ENCODE measurements at regions of chr9 and their contacts with region 1.

Region 1: GRCh38 chr9:38061326-38061977 is 7.6 kb downstream of the SHB start:
- DNase-seq: no peak
- ATAC-seq: no peak
- H3K4me3 ChIP-seq: no peak overlapping the region
- H3K27ac ChIP-seq: peak overlapping the region; percentile 24; the same call in 1 of the 2 replicates
- H3K4me1 ChIP-seq: peaks cover 52% of the 10 kb centered on the region
- H3K27me3 ChIP-seq: no peaks in the 10 kb centered on the region
- CTCF ChIP-seq: no peak
- POLR2A ChIP-seq: no peak
- RAD21 ChIP-seq: no peak

Region 2: DNA sequence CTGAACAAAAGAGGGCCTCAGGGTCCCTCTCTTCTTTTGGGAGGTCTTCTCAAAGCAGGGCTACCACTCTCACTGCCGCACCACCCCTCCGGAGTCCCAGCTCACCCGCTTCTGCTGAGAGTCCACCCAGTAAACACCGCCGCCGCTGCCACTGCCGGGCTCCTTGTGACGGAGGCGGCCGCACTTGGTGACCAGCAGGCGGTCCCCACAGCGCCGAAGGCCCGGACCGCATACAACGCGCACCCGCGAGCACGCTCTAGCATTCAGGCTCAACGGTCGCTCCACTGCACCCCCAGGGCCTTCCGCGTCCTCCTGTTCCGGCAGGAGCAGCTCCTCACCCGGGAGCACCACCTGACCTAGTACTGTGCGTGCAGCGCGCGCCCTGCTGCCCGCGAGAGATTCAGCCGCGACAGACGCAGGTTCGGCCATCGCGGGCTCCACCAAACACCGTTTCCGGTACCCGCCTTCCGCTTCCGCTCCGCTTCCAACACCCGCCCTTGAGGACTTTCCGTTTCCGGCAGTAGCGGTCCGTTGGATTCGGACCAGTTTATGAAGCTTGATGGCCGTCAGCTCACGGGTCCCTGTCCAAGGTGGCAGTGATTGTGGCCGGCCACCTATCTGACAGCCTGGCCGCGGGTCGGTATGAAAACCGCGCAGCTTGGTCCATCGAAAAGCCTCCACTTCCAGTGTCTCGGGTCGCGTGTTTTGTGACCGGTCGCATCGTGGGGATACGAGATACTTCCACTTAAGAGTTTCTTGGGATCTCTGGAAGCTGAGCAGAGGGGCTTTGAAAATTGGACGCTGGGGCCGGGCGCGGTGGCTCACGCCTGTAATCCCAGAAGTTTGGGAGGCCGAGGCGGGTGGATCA is 276.6 kb before region 1 on chr9 and contains the start of gene EXOSC3:
- CTCF ChIA-PET with region 1: no interaction called
- POLR2A ChIA-PET with region 1: interaction called, 10 read pairs
- dilution Hi-C with region 1: no loop called
- in situ Hi-C with region 1: no loop called
- intact Hi-C with region 1: no loop called
- DNase-seq: peak; percentile 90
- ATAC-seq: peak; percentile 90
- H3K4me3 ChIP-seq: peak within 1 kb of the TSS; percentile 94
- H3K27ac ChIP-seq: peak within 1 kb of the TSS; percentile 95
- H3K4me1 ChIP-seq: peaks cover 3% of the 10 kb centered on the region; the same call in 1 of the 2 replicates
- H3K27me3 ChIP-seq: no peaks in the 10 kb centered on the region
- CTCF ChIP-seq: 0 out of 2 replicates have a peak, but pooled peaks have one; percentile 4
- POLR2A ChIP-seq: peak; percentile 68; the same call in 1 of the 2 replicates
- RAD21 ChIP-seq: peak; percentile 9
- total RNA-seq, gene EXOSC3: 27.1 and 58.6 TPM in 2 replicates

Region 3: DNA sequence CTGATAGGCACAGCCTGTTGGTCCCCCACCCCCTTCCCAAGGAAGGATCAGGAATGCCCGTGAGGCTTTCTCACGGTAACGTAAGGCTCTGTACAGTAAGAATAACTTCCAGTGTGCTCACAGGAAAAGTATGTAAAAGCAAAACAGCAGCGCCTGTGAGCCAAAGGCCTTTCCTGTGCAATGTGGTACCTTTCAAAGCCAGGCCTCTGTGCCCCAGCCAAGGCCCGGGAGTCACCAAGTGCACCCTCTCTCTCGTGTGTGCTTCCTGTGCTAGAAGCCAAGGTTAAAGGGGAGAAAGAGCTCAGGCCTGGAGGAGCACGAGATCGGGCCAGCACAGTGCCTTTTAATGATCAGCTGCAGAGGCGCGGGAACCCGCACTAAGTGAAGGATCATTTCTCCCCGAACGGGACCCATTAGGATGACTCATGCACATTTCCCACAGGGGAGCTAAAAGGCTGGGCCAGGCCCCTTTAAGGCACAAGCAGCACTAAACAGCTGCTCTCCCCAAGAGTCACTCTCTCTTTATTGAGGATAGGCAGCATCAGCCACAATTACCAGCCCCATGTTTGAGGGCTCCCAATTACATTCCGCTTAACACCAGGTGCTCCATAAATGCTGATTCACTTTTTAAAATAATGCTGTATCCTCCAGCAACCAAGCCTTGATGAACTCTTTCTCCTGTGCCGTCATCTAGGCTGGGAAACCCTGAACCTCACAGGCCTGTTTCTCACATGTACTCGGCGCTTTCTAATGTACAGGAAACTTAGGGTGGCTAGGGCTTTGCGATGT is 35.2 kb before region 1 on chr9:
- CTCF ChIA-PET with region 1: no interaction called
- POLR2A ChIA-PET with region 1: no interaction called
- dilution Hi-C with region 1: no loop called
- in situ Hi-C with region 1: loop called (anchors 5 kb)
- intact Hi-C with region 1: loop called (anchors 2 kb)
- DNase-seq: peak; percentile 98
- ATAC-seq: peak; percentile 77
- H3K4me3 ChIP-seq: no peak overlapping the region
- H3K27ac ChIP-seq: peak overlapping the region; percentile 96
- H3K4me1 ChIP-seq: peaks cover 59% of the 10 kb centered on the region
- H3K27me3 ChIP-seq: no peaks in the 10 kb centered on the region
- CTCF ChIP-seq: no peak
- POLR2A ChIP-seq: no peak; the same call in 1 of the 2 replicates
- RAD21 ChIP-seq: peak; percentile 28